ENCODE measurements at regions of chr20 and their contacts with region 1.

Region 1: GRCh38 chr20:43749734-43750294 is 23.0 kb upstream of the GTSF1L start:
- DNase-seq: peak; percentile 84
- H3K4me3 ChIP-seq: no peak overlapping the region
- H3K27ac ChIP-seq: no peak overlapping the region
- H3K4me1 ChIP-seq: peaks cover 5% of the 10 kb centered on the region
- H3K27me3 ChIP-seq: no peaks in the 10 kb centered on the region
- CTCF ChIP-seq: peak; percentile 100

Region 2: DNA sequence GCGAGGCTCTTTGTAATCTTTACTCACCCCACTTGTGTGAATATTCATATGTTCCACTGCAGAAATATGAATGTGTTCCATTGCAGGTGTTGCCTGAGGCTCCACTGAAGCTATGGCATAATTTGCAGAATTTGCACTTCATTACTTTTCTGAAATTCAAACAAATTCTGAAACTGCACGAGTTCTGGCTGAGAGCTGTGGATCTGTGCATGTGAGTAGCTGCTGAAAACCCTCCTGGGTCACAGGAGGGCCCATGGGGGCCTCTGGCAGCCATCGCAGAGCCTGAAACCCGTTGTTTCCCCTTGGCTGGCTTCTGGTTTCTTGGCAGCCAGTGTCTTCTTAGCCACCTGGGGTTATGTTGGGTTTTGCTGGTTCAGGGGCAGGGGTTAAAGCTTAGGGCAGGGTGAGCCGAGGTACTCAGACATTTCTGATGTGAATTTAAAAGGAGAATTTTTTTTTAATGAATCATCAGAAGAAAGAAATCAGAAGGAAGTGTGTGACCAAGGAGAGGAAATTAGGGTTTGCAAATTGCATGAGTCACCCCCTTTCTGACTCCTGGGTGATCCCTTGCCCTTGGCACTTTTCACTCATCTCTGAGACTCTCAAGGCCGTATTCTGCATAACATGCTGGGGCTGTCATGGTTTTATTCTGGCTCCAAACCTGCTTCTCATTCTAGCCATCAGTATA is 205.4 kb after region 1 on chr20:
- intact Hi-C with region 1: loop called (anchors 10 kb)
- DNase-seq: no peak
- H3K4me3 ChIP-seq: no peak overlapping the region
- H3K27ac ChIP-seq: no peak overlapping the region
- H3K4me1 ChIP-seq: no peaks in the 10 kb centered on the region
- H3K27me3 ChIP-seq: no peaks in the 10 kb centered on the region
- CTCF ChIP-seq: no peak

Region 3: DNA sequence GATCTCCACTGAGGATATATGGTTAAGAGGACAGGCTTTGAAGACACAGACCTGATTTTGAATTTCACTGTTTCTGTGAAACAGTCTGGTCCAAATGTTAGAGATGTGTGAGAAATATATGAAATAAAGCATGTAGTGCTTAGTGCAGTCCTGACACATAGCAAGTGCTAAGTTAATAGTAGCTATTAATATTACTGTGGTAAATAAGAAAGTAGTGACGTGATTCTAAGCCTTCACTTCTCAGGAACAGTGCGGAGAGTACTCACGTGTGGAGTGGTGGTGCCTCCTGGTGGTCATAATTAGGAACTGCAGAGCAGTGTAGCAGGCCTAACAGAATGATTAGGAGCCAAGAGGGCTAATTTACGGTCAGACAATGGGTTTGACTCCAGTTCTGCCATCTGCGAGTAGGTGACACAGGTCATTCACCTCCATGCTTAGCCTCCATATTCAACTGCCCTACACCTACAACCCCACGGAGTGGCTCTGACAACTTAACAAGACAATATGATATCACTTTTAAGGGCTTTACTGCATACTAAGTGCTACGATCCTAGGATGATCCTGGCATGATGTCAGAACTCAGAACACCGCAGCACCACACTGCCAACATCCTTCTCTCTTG is 330.9 kb after region 1 on chr20:
- intact Hi-C with region 1: loop called (anchors 1 kb)
- DNase-seq: peak; percentile 83
- H3K4me3 ChIP-seq: no peak overlapping the region
- H3K27ac ChIP-seq: no peak overlapping the region
- H3K4me1 ChIP-seq: no peaks in the 10 kb centered on the region
- H3K27me3 ChIP-seq: no peaks in the 10 kb centered on the region
- CTCF ChIP-seq: peak; percentile 99

Region 4: DNA sequence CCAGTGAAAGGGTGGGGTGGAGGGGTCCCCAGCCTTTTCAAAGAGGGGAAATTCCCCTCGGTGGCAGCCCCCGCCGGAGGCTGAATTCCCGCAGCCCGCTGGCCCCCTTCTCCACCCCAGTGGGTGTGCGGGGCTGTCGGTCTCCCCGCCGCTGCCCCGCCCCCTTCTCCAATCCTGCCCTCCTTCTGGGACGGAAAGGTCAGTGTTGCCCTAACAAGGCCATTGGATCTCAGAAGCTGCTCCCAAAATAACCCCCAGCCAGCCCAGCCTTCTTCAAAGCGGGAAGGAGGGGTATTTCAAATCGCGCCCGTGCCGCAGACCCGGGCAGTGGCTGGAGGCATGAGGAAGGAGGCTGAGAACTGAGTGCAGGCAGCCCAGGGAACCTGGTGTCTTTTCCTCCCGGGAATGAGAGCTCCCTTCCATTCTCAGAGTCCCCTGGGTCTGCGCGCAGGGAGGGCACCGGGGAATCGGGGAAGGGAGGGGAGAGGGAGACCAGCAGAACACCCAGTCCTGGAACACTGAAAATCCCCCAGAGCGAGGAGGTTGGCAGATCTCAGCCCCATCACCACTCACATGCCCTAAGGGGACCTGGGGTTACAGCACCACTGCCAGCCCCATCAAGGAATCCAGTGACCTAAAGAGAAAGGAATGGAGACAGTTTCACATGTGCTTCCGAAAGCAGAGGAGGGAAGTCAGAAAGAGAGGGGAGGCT is 437.4 kb after region 1 on chr20 and contains the start of gene JPH2:
- intact Hi-C with region 1: loop called (anchors 10 kb)
- DNase-seq: peak; percentile 64
- H3K4me3 ChIP-seq: peak within 1 kb of the TSS; percentile 35
- H3K27ac ChIP-seq: peak within 1 kb of the TSS; percentile 47
- H3K4me1 ChIP-seq: no peaks in the 10 kb centered on the region
- H3K27me3 ChIP-seq: no peaks in the 10 kb centered on the region
- CTCF ChIP-seq: no peak
- total RNA-seq, gene JPH2: 1.3 to 13.8 TPM